GM12878 (cell line): ENCODE measurements at regions of chr20 and their contacts with region 1.

Region 1: GRCh38 chr20:37345339-37346230 is at the start of gene SRC:
- DNase-seq: no peak
- ATAC-seq: peak; percentile 54
- H3K4me3 ChIP-seq: peak within 1 kb of the TSS; percentile 87
- H3K27ac ChIP-seq: peak within 1 kb of the TSS; percentile 90
- H3K4me1 ChIP-seq: peaks cover 29% of the 10 kb centered on the region
- H3K27me3 ChIP-seq: no peaks in the 10 kb centered on the region
- CTCF ChIP-seq: 0 out of 6 replicates have a peak, but pooled peaks of 1 of the 3 experiments have one; percentile 4
- EP300 ChIP-seq: no peak
- POLR2A ChIP-seq: peak; percentile 69
- RAD21 ChIP-seq: no peak
- polyA plus RNA-seq, gene SRC: 0.60 to 0.85 TPM

Region 2: DNA sequence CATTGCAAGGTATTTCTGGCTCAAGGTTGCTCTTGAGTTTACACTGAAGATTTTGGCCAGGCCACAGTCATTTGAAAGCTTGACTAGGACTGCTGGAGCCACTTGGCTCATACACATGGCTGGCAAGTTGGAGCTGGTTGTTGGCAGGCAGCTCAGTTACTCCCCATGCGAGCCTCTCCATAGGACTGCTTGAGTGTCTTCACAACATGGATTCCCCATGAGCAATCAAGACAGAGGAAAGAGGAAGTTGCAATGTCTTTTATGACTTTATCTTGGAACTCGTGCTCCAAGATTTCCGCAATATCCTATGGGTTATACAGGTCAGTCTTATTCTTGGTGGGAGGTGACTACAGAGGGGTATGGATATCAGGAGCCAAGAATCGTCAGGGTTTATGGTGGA is 57.5 kb before region 1 on chr20:
- CTCF ChIA-PET with region 1: interaction called, 3 read pairs
- POLR2A ChIA-PET with region 1: interaction called, 8 read pairs
- RAD21 ChIA-PET with region 1: interaction called, 11 read pairs
- SMC1A ChIA-PET with region 1: interaction called, 16 read pairs
- in situ Hi-C with region 1: no loop called
- intact Hi-C with region 1: loop called (anchors 1 kb)
- DNase-seq: no peak
- ATAC-seq: no peak
- H3K4me3 ChIP-seq: no peak overlapping the region
- H3K27ac ChIP-seq: no peak overlapping the region
- H3K4me1 ChIP-seq: peaks cover 16% of the 10 kb centered on the region
- H3K27me3 ChIP-seq: no peaks in the 10 kb centered on the region
- CTCF ChIP-seq: no peak
- EP300 ChIP-seq: no peak
- POLR2A ChIP-seq: no peak
- RAD21 ChIP-seq: no peak

Region 3: GRCh38 chr20:37295001-37295400 is 50.6 kb before region 1 on chr20:
- CTCF ChIA-PET with region 1: no interaction called
- POLR2A ChIA-PET with region 1: interaction called, 8 read pairs
- RAD21 ChIA-PET with region 1: interaction called, 11 read pairs
- SMC1A ChIA-PET with region 1: interaction called, 16 read pairs
- in situ Hi-C with region 1: no loop called
- intact Hi-C with region 1: loop called (anchors 1 kb)
- DNase-seq: no peak
- ATAC-seq: peak; percentile 26
- H3K4me3 ChIP-seq: no peak overlapping the region; the same call in 1 of the 2 replicates
- H3K27ac ChIP-seq: peak overlapping the region; percentile 66
- H3K4me1 ChIP-seq: peaks cover 63% of the 10 kb centered on the region
- H3K27me3 ChIP-seq: no peaks in the 10 kb centered on the region
- CTCF ChIP-seq: no peak
- EP300 ChIP-seq: no peak
- POLR2A ChIP-seq: no peak
- RAD21 ChIP-seq: no peak

Region 4: DNA sequence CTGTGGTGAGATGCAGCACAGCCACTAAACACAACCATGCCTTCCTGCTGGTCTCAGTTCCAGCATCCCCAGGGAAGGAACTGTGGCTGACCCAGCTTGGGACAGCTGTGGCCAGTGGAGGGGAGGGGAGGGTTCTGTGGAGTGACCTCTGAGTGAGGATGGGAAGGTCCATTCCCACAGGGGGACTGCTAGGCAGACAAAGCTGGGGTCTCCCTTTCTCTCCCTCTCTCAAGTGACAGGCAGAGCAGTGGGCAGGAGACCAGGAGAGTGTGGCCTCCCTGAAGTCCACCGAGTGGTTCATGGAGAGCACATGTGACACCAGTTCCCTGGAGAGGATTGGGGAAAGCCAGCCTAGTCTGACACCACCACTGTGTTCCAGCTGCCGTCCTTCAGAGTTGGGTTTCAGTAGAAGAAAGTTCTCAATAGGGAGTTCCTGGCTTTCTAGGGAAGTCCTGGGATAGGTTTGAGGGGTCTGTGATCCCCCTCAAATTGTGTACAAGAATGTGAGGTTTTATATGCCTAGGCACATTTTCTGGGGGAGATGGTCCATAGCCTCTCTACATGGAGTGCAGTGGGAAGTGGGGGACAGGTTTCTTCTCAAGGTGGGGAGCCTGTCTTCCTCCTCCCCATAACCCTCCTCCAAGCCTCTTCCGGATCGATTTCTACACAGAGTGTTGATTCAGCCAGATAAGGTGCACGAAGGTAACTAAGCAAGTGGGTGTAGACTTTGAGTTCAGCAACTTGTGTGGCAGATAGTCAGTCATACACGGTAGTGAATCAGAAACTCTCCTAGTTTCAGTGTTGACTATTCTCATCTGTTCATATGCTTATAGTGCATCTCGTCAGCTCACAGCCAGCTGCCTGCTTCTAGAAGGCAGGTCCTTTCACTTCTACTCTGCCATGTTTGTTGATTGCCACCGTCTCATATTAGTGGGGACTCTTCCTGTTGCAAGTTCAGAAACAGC is 37.2 kb before region 1 on chr20:
- CTCF ChIA-PET with region 1: interaction called, 3 read pairs
- POLR2A ChIA-PET with region 1: interaction called, 3 read pairs
- RAD21 ChIA-PET with region 1: interaction called, 4 read pairs
- SMC1A ChIA-PET with region 1: interaction called, 5 read pairs
- in situ Hi-C with region 1: no loop called
- intact Hi-C with region 1: loop called (anchors 2 kb)
- DNase-seq: peak; percentile 84
- ATAC-seq: peak; percentile 98
- H3K4me3 ChIP-seq: no peak overlapping the region
- H3K27ac ChIP-seq: peak overlapping the region; percentile 93
- H3K4me1 ChIP-seq: peaks cover 36% of the 10 kb centered on the region
- H3K27me3 ChIP-seq: no peaks in the 10 kb centered on the region
- CTCF ChIP-seq: no peak
- EP300 ChIP-seq: no peak
- POLR2A ChIP-seq: 0 out of 2 replicates have a peak, but pooled peaks have one; percentile 35
- RAD21 ChIP-seq: no peak

Region 5: GRCh38 chr20:37356387-37356786 is 10.8 kb after region 1 on chr20:
- CTCF ChIA-PET with region 1: interaction called, 6 read pairs
- POLR2A ChIA-PET with region 1: interaction called, 8 read pairs
- RAD21 ChIA-PET with region 1: interaction called, 8 read pairs
- SMC1A ChIA-PET with region 1: interaction called, 10 read pairs
- in situ Hi-C with region 1: no loop called
- intact Hi-C with region 1: no loop called
- DNase-seq: no peak
- ATAC-seq: peak; percentile 15
- H3K4me3 ChIP-seq: peak overlapping the region; percentile 41; the same call in 1 of the 2 replicates
- H3K27ac ChIP-seq: peak overlapping the region; percentile 59
- H3K4me1 ChIP-seq: peaks cover 29% of the 10 kb centered on the region
- H3K27me3 ChIP-seq: no peaks in the 10 kb centered on the region
- CTCF ChIP-seq: no peak
- EP300 ChIP-seq: no peak
- POLR2A ChIP-seq: no peak
- RAD21 ChIP-seq: no peak

Region 6: DNA sequence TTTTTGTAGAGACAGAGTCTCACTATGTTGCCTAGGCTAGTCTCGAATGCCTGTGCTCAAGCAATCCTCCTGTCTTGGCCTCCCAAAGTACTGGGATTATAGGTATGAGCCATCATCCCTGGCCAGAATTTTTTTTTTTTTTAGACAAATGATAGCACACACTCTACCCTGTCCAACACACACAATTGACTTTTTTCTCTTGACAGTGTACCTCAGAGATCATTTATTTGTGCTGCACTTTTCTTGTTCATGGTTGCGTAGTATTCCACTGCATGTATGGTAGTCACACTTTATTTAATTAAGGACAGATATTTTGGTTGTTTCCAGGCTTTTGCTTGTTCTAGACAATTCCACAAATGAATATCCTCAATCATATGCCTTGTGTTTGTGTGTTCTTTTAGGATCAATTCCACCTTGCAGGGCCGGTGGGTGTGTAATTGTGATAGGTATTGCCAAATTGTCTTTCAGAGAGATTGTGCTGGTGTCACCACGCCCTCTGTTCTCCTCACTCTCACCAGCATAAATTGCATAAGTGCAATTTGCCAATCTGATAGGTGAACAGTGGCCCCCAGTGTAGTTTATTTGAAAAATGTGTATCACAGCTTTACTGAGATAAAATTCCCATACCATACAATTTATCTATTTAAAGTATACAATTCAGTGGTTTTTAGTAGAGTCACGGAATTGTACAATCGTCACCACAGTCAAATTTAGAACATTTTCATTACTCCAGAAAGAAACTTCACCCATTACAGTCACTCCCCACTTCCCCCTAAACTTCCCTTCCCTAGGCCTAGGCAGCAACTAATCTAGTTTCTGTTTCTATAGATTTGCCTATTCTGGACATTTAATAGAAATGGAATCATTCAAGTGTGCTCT is 20.4 kb after region 1 on chr20:
- CTCF ChIA-PET with region 1: no interaction called
- POLR2A ChIA-PET with region 1: interaction called, 8 read pairs
- RAD21 ChIA-PET with region 1: interaction called, 4 read pairs
- SMC1A ChIA-PET with region 1: interaction called, 19 read pairs
- in situ Hi-C with region 1: no loop called
- intact Hi-C with region 1: no loop called
- DNase-seq: peak; percentile 90
- ATAC-seq: peak; percentile 86
- H3K4me3 ChIP-seq: peak overlapping the region; percentile 2; the same call in 1 of the 2 replicates
- H3K27ac ChIP-seq: peak overlapping the region; percentile 87
- H3K4me1 ChIP-seq: peaks cover 74% of the 10 kb centered on the region
- H3K27me3 ChIP-seq: no peaks in the 10 kb centered on the region
- CTCF ChIP-seq: peak in 1 of 3 experiments; percentile 2; a peak in 1 of 6 replicates
- EP300 ChIP-seq: peak; percentile 77 to 79; a peak in 3 of 4 replicates
- POLR2A ChIP-seq: no peak
- RAD21 ChIP-seq: peak; percentile 57

Region 7: GRCh38 chr20:37373020-37373598 is 27.5 kb after region 1 on chr20:
- CTCF ChIA-PET with region 1: interaction called, 3 read pairs
- POLR2A ChIA-PET with region 1: interaction called, 6 read pairs
- RAD21 ChIA-PET with region 1: interaction called, 4 read pairs
- SMC1A ChIA-PET with region 1: interaction called, 19 read pairs
- in situ Hi-C with region 1: no loop called
- intact Hi-C with region 1: no loop called
- DNase-seq: no peak
- ATAC-seq: no peak
- H3K4me3 ChIP-seq: no peak overlapping the region
- H3K27ac ChIP-seq: no peak overlapping the region; the same call in 1 of the 2 replicates
- H3K4me1 ChIP-seq: peaks cover 75% of the 10 kb centered on the region
- H3K27me3 ChIP-seq: no peaks in the 10 kb centered on the region
- CTCF ChIP-seq: no peak
- EP300 ChIP-seq: no peak
- POLR2A ChIP-seq: no peak
- RAD21 ChIP-seq: no peak

Region 8: DNA sequence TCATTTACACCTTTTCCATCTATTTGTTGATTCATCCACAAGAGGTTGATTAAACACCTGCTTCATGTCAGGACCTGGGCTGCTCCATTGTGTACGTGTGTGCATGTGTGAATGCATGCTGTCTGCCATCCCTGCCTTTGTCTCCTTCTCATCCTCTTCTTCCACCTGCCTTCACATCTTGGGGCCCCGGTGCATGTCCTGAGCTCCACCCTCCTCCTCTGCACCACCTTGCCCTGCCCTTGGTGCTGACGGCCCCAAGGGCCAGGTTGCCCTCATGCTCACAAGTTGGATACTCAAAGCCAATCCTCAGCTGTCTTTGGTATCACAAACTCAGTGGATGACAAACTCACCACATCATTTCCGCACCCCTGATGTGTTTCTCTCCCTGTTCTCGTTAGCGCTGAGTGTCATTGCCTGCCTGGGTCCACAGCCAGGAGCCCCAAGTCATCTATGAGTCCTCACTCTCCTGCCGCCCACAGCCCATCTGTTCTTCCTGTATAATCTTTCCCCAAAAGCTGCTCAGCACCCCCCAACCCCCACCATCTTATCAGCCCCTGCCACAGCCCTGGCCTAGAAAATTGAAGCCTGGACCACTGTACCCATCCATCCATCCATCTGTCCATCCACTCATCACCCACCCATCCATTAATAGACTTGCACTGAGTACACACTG is 85.3 kb after region 1 on chr20:
- CTCF ChIA-PET with region 1: no interaction called
- POLR2A ChIA-PET with region 1: no interaction called
- RAD21 ChIA-PET with region 1: no interaction called
- SMC1A ChIA-PET with region 1: no interaction called
- in situ Hi-C with region 1: no loop called
- intact Hi-C with region 1: no loop called
- DNase-seq: no peak
- ATAC-seq: no peak
- H3K4me3 ChIP-seq: no peak overlapping the region
- H3K27ac ChIP-seq: no peak overlapping the region
- H3K4me1 ChIP-seq: no peaks in the 10 kb centered on the region
- H3K27me3 ChIP-seq: peaks cover 0 to 5% of the 10 kb centered on the region in 2 experiments; a peak in 2 of 4 replicates
- CTCF ChIP-seq: no peak
- EP300 ChIP-seq: no peak
- POLR2A ChIP-seq: no peak
- RAD21 ChIP-seq: no peak